ENCODE measurements at regions of chr6 and their contacts with region 1.

Region 1: GRCh38 chr6:135514706-135515105 is 17.2 kb upstream of the AHI1 start:
- DNase-seq: no peak
- H3K4me3 ChIP-seq: no peak overlapping the region
- H3K27ac ChIP-seq: no peak overlapping the region
- H3K4me1 ChIP-seq: no peaks in the 10 kb centered on the region
- H3K27me3 ChIP-seq: no peaks in the 10 kb centered on the region
- CTCF ChIP-seq: no peak
- EP300 ChIP-seq: no peak
- POLR2A ChIP-seq: no peak

Region 2: GRCh38 chr6:133854364-133855275 is 1660.1 kb before region 1 on chr6:
- in situ Hi-C with region 1: no loop called
- intact Hi-C with region 1: loop called (anchors 10 kb)
- DNase-seq: no peak
- H3K4me3 ChIP-seq: no peak overlapping the region
- H3K27ac ChIP-seq: no peak overlapping the region
- H3K4me1 ChIP-seq: no peaks in the 10 kb centered on the region
- H3K27me3 ChIP-seq: peaks cover 68% of the 10 kb centered on the region
- CTCF ChIP-seq: no peak
- EP300 ChIP-seq: no peak
- POLR2A ChIP-seq: no peak

Region 3: GRCh38 chr6:135657207-135657606 is 142.5 kb after region 1 on chr6:
- in situ Hi-C with region 1: no loop called
- intact Hi-C with region 1: no loop called
- DNase-seq: no peak
- H3K4me3 ChIP-seq: no peak overlapping the region
- H3K27ac ChIP-seq: no peak overlapping the region
- H3K4me1 ChIP-seq: no peaks in the 10 kb centered on the region
- H3K27me3 ChIP-seq: no peaks in the 10 kb centered on the region
- CTCF ChIP-seq: no peak
- EP300 ChIP-seq: no peak
- POLR2A ChIP-seq: no peak

Measured in transverse colon (tissue), 4 donors.